ENCODE measurements at regions of chr10 and their contacts with region 1.

Region 1: GRCh38 chr10:55263327-55263726 is 462.3 kb upstream of the PCDH15 start:
- DNase-seq: no peak
- H3K4me3 ChIP-seq: no peak overlapping the region
- H3K27ac ChIP-seq: no peak overlapping the region
- H3K4me1 ChIP-seq: no peaks in the 10 kb centered on the region
- H3K27me3 ChIP-seq: peaks cover 0 to 5% (median 0%) of the 10 kb centered on the region in 4 donors
- CTCF ChIP-seq: no peak
- EP300 ChIP-seq: no peak
- POLR2A ChIP-seq: no peak

Region 2: GRCh38 chr10:53601260-53601875 is 1662.0 kb before region 1 on chr10:
- intact Hi-C with region 1: loop called (anchors 10 kb)
- DNase-seq: no peak
- H3K4me3 ChIP-seq: no peak overlapping the region
- H3K27ac ChIP-seq: no peak overlapping the region
- H3K4me1 ChIP-seq: no peaks in the 10 kb centered on the region
- H3K27me3 ChIP-seq: no peaks in the 10 kb centered on the region
- CTCF ChIP-seq: peak; percentile 48 to 76 (median 68)
- EP300 ChIP-seq: no peak
- POLR2A ChIP-seq: no peak

Region 3: DNA sequence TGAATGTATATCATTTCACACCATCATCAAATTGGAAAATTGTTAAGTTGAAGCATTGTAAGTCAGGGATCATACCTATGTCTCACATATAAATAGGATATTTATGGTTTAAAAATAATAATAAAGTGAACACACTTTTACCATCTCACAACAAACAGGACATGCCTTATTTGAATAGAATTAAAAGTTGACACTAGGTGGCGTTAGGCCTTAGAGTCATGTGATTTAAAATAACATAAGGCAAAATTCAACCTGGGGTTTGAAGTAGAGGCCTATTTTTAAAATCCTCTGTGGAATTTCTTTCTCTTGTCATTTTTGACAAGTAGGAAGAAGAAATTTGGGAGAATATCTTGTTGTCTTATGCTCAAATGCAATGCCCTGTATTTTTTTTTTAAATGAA is 277.6 kb before region 1 on chr10:
- intact Hi-C with region 1: loop called (anchors 10 kb)
- DNase-seq: no peak
- H3K4me3 ChIP-seq: no peak overlapping the region
- H3K27ac ChIP-seq: no peak overlapping the region
- H3K4me1 ChIP-seq: no peaks in the 10 kb centered on the region
- H3K27me3 ChIP-seq: no peaks in the 10 kb centered on the region
- CTCF ChIP-seq: peak in 2 of 3 experiments; percentile 13 to 37
- EP300 ChIP-seq: no peak
- POLR2A ChIP-seq: no peak

Region 4: GRCh38 chr10:55091691-55092328 is 171.5 kb before region 1 on chr10:
- intact Hi-C with region 1: loop called (anchors 5 kb)
- DNase-seq: no peak
- H3K4me3 ChIP-seq: no peak overlapping the region
- H3K27ac ChIP-seq: no peak overlapping the region
- H3K4me1 ChIP-seq: no peaks in the 10 kb centered on the region
- H3K27me3 ChIP-seq: no peaks in the 10 kb centered on the region
- CTCF ChIP-seq: peak in 2 of 3 experiments; percentile 57 to 71
- EP300 ChIP-seq: no peak
- POLR2A ChIP-seq: no peak

Region 5: DNA sequence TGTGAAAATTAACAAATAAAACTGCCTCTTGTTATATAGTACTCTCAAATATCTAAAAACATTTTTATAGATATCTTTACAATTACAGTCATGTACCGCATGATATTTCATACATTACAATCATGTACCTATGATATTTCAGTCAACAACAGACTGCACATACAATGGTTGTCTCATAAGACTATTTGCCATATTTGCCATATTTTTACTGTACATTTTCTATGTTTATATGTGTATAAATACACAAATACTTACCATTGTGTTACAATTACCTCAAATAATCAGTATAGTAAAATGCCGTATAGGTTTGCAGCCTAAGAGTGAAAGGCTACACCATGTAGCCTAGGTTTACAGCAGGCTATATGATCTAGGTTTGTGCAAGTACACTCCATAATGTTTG is 126.3 kb before region 1 on chr10:
- intact Hi-C with region 1: no loop called
- DNase-seq: no peak
- H3K4me3 ChIP-seq: no peak overlapping the region
- H3K27ac ChIP-seq: no peak overlapping the region
- H3K4me1 ChIP-seq: no peaks in the 10 kb centered on the region
- H3K27me3 ChIP-seq: no peaks in the 10 kb centered on the region
- CTCF ChIP-seq: no peak
- EP300 ChIP-seq: no peak
- POLR2A ChIP-seq: no peak

Measured in esophagus muscularis mucosa (tissue), 4 donors.